WTC11 (cell line): ENCODE measurements at regions of chr14 and their contacts with region 1.

Region 1: DNA sequence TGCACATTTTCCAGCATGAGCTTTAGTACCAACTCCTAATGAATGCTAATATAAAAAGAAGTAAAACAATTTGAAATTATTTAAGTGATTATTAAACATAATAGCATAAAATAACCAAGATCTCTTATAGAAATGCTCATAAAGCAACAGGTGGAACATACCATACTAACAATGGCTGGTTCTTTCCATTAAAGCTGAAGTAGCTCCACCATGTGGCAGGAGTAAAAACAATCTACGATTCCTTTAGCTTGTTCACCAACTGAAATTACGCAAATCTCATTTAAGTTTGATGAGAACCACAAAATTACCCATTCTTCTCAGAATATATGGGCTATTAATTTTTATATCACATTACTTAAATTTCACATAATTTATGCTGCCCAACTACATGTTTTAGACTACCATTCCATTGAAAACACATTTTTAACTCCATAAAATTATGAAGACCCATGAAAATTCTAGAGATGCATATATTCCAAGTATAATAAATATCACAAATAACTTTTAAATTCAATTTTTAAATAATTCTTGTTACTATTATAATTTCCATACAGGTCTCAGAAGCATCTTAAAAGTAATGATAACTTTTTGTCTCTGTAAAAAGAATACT is 213.6 kb downstream of the DAD1 start:
- DNase-seq: no peak
- ATAC-seq: no peak
- H3K4me3 Mint-ChIP-seq: no peak overlapping the region
- H3K27ac Mint-ChIP-seq: no peak overlapping the region
- H3K4me1 Mint-ChIP-seq: no peaks in the 10 kb centered on the region
- H3K27me3 Mint-ChIP-seq: peaks cover 3% of the 10 kb centered on the region; the same call in 1 of the 2 replicates
- CTCF ChIP-seq: no peak

Region 2: DNA sequence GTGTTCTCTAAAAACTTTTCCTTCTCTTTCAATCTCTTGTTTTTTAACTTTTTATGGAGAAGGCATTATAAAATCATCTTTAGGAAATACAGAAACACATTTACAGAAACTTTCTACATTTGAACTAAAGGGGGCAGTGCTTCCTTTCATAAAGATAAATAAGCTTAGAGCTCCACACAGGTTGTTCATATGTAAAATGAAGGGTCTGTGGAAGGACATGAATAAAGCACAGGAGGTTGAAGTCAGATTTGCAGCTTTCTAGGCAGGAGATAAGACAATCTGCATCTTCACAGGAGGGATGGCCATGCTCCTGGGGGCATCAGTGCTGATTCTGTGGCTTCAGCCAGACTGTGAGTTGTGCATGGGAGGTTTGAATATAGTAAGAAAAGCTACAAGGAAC is 212.4 kb before region 1 on chr14:
- CTCF ChIA-PET with region 1: interaction called, 16 read pairs
- POLR2A ChIA-PET with region 1: no interaction called
- DNase-seq: no peak
- ATAC-seq: peak; percentile 71
- H3K4me3 Mint-ChIP-seq: no peak overlapping the region
- H3K27ac Mint-ChIP-seq: no peak overlapping the region
- H3K4me1 Mint-ChIP-seq: peaks cover 24% of the 10 kb centered on the region
- H3K27me3 Mint-ChIP-seq: no peaks in the 10 kb centered on the region
- CTCF ChIP-seq: no peak

Region 3: GRCh38 chr14:22221508-22221907 is 153.9 kb before region 1 on chr14:
- CTCF ChIA-PET with region 1: interaction called, 52 read pairs
- POLR2A ChIA-PET with region 1: no interaction called
- DNase-seq: no peak
- ATAC-seq: no peak
- H3K4me3 Mint-ChIP-seq: no peak overlapping the region
- H3K27ac Mint-ChIP-seq: no peak overlapping the region
- H3K4me1 Mint-ChIP-seq: peaks cover 2% of the 10 kb centered on the region
- H3K27me3 Mint-ChIP-seq: no peaks in the 10 kb centered on the region
- CTCF ChIP-seq: no peak

Region 4: GRCh38 chr14:22333422-22334276 is 41.8 kb before region 1 on chr14:
- CTCF ChIA-PET with region 1: interaction called, 12 read pairs
- POLR2A ChIA-PET with region 1: no interaction called
- DNase-seq: no peak
- ATAC-seq: no peak; the same call in 1 of the 2 replicates
- H3K4me3 Mint-ChIP-seq: no peak overlapping the region
- H3K27ac Mint-ChIP-seq: peak overlapping the region; percentile 82
- H3K4me1 Mint-ChIP-seq: peaks cover 28% of the 10 kb centered on the region
- H3K27me3 Mint-ChIP-seq: peaks cover 17% of the 10 kb centered on the region
- CTCF ChIP-seq: no peak

Region 5: GRCh38 chr14:22432348-22432976 is 57.0 kb after region 1 on chr14:
- CTCF ChIA-PET with region 1: no interaction called
- POLR2A ChIA-PET with region 1: no interaction called
- DNase-seq: no peak
- ATAC-seq: no peak
- H3K4me3 Mint-ChIP-seq: no peak overlapping the region
- H3K27ac Mint-ChIP-seq: peak overlapping the region; percentile 48; the same call in 1 of the 2 replicates
- H3K4me1 Mint-ChIP-seq: peaks cover 6% of the 10 kb centered on the region
- H3K27me3 Mint-ChIP-seq: no peaks in the 10 kb centered on the region
- CTCF ChIP-seq: no peak